PC-9 (cell line): ENCODE measurements at regions of chr10 and their contacts with region 1.

Region 1: GRCh38 chr10:73743905-73744663 is at the start of gene SEC24C:
- DNase-seq: peak; percentile 89 to 97
- H3K4me3 ChIP-seq: peak within 1 kb of the TSS; percentile 69
- H3K27ac ChIP-seq: peak within 1 kb of the TSS; percentile 88
- H3K4me1 ChIP-seq: peaks cover 36% of the 10 kb centered on the region
- H3K27me3 ChIP-seq: no peaks in the 10 kb centered on the region
- CTCF ChIP-seq: no peak
- total RNA-seq, gene SEC24C: 83.1 and 105 TPM in 2 replicates

Region 2: GRCh38 chr10:73759512-73760115 is 15.5 kb after region 1 on chr10:
- CTCF ChIA-PET with region 1: interaction called, 10 read pairs
- POLR2A ChIA-PET with region 1: interaction called, 3 read pairs
- intact Hi-C with region 1: no loop called
- DNase-seq: peak in 1 of 2 experiments; percentile 51
- H3K4me3 ChIP-seq: no peak overlapping the region
- H3K27ac ChIP-seq: no peak overlapping the region
- H3K4me1 ChIP-seq: peaks cover 11% of the 10 kb centered on the region
- H3K27me3 ChIP-seq: no peaks in the 10 kb centered on the region
- CTCF ChIP-seq: no peak

Region 3: GRCh38 chr10:73785221-73785720 is 41.2 kb after region 1 on chr10 and contains the start of gene ZSWIM8:
- CTCF ChIA-PET with region 1: no interaction called
- POLR2A ChIA-PET with region 1: interaction called, 3 read pairs
- intact Hi-C with region 1: loop called (anchors 1 kb)
- DNase-seq: peak; percentile 80 to 93
- H3K4me3 ChIP-seq: peak within 1 kb of the TSS; percentile 58
- H3K27ac ChIP-seq: 0 out of 2 replicates have a peak within 1 kb of the TSS, but pooled peaks have one; percentile 14
- H3K4me1 ChIP-seq: peaks cover 35% of the 10 kb centered on the region
- H3K27me3 ChIP-seq: no peaks in the 10 kb centered on the region
- CTCF ChIP-seq: no peak
- total RNA-seq, gene ZSWIM8: 49.2 and 70.0 TPM in 2 replicates

Region 4: GRCh38 chr10:73871915-73872710 is 128.0 kb after region 1 on chr10:
- CTCF ChIA-PET with region 1: interaction called, 15 read pairs
- POLR2A ChIA-PET with region 1: no interaction called
- intact Hi-C with region 1: no loop called
- DNase-seq: peak; percentile 94 to 100
- H3K4me3 ChIP-seq: peak overlapping the region; percentile 64
- H3K27ac ChIP-seq: peak overlapping the region; percentile 88
- H3K4me1 ChIP-seq: peaks cover 75% of the 10 kb centered on the region
- H3K27me3 ChIP-seq: no peaks in the 10 kb centered on the region
- CTCF ChIP-seq: peak; percentile 58; the same call in 1 of the 2 replicates